Naive thymus-derived CD4-positive, alpha-beta T cell (primary cell): ENCODE measurements at regions of chr13 and their contacts with region 1.

Region 1: DNA sequence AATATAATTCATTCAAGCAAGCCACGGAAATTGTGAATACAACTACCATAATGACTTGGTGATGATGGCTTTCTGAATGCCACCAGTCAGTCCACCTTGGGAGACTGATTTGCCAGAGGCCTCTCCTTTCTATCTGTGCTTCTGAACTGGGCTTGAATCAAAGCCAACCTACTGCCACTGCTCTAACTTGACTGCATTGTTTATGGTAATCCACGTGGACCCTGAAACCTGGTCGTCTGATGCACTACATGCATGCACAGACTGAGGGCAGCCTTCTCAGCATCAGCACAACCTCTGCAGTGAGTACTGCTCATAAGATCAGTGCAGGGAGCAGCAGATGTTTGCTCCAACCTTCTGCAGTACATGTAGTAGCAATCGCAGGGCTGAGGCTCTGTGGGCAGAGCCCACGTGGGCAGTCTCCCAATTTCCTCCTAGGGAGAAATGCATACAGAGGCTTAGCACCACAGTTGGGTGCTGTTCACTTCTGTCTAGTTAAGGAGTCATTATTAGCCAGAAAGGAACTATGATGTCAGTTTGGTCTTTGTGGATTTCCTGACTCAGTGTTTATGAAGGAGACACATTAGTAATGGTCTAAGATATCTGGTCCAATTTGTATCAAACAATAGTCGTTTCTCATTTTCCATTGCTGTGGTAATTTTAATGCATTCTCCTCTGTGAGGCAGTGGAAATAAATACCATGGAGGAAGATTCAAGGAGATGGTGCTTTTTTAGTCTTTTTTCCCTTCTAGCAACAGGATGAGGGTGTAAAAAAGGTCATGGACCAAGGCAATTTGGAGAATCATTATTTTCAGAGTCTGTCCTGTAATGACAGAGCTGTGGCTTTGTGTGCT is 82.5 kb downstream of the AKAP11 start:
- DNase-seq: peak in 7 of 9 donors; percentile 11 to 44 (median 24)
- ATAC-seq: peak; percentile 66
- H3K4me3 ChIP-seq: peak overlapping the region; percentile 27
- H3K4me3 Mint-ChIP-seq: peak overlapping the region; percentile 52 to 79 (median 72)
- H3K27ac ChIP-seq: peak overlapping the region; percentile 56
- H3K27ac Mint-ChIP-seq: peak overlapping the region; percentile 80 to 96 (median 91)
- H3K4me1 ChIP-seq: peaks cover 33 to 35% of the 10 kb centered on the region in 2 donors
- H3K4me1 Mint-ChIP-seq: peaks cover 19 to 53% (median 48%) of the 10 kb centered on the region in 7 donors
- H3K27me3 ChIP-seq: no peaks in the 10 kb centered on the region
- H3K27me3 Mint-ChIP-seq: no peaks in the 10 kb centered on the region

Region 2: GRCh38 chr13:42056146-42056545 is 298.3 kb before region 1 on chr13:
- CTCF ChIA-PET with region 1: no interaction called
- POLR2A ChIA-PET with region 1: no interaction called
- intact Hi-C with region 1: no loop called
- DNase-seq: no peak
- ATAC-seq: no peak
- H3K4me3 ChIP-seq: no peak overlapping the region
- H3K4me3 Mint-ChIP-seq: no peak overlapping the region
- H3K27ac ChIP-seq: no peak overlapping the region
- H3K27ac Mint-ChIP-seq: no peak overlapping the region
- H3K4me1 ChIP-seq: no peaks in the 10 kb centered on the region
- H3K4me1 Mint-ChIP-seq: peaks cover 0 to 36% (median 4%) of the 10 kb centered on the region in 7 donors
- H3K27me3 ChIP-seq: no peaks in the 10 kb centered on the region
- H3K27me3 Mint-ChIP-seq: no peaks in the 10 kb centered on the region

Region 3: GRCh38 chr13:42320375-42320787 is 34.1 kb before region 1 on chr13:
- CTCF ChIA-PET with region 1: no interaction called
- POLR2A ChIA-PET with region 1: no interaction called
- intact Hi-C with region 1: loop called in 1 of 2 experiments (anchors 5 kb)
- DNase-seq: no peak
- ATAC-seq: no peak
- H3K4me3 ChIP-seq: no peak overlapping the region
- H3K4me3 Mint-ChIP-seq: peak overlapping the region in 1 of 10 donors; percentile 39
- H3K27ac ChIP-seq: no peak overlapping the region
- H3K27ac Mint-ChIP-seq: peak overlapping the region in 5 of 9 donors; percentile 7 to 89 (median 56)
- H3K4me1 ChIP-seq: peaks cover 0 to 4% of the 10 kb centered on the region in 2 donors
- H3K4me1 Mint-ChIP-seq: peaks cover 11 to 31% (median 21%) of the 10 kb centered on the region in 7 donors
- H3K27me3 ChIP-seq: no peaks in the 10 kb centered on the region
- H3K27me3 Mint-ChIP-seq: no peaks in the 10 kb centered on the region

Region 4: GRCh38 chr13:42377640-42378382 is 23.3 kb after region 1 on chr13:
- CTCF ChIA-PET with region 1: no interaction called
- POLR2A ChIA-PET with region 1: interaction called, 3 read pairs
- intact Hi-C with region 1: loop called in 1 of 2 experiments (anchors 1 kb)
- DNase-seq: peak in 2 of 9 donors; percentile 28 to 56
- ATAC-seq: peak; percentile 83
- H3K4me3 ChIP-seq: no peak overlapping the region
- H3K4me3 Mint-ChIP-seq: peak overlapping the region in 5 of 10 donors; percentile 16 to 63 (median 33)
- H3K27ac ChIP-seq: peak overlapping the region; percentile 19
- H3K27ac Mint-ChIP-seq: peak overlapping the region in 6 of 9 donors; percentile 33 to 92 (median 55)
- H3K4me1 ChIP-seq: peaks cover 17 to 18% of the 10 kb centered on the region in 2 donors
- H3K4me1 Mint-ChIP-seq: peaks cover 10 to 61% (median 29%) of the 10 kb centered on the region in 7 donors
- H3K27me3 ChIP-seq: no peaks in the 10 kb centered on the region
- H3K27me3 Mint-ChIP-seq: no peaks in the 10 kb centered on the region

Region 5: DNA sequence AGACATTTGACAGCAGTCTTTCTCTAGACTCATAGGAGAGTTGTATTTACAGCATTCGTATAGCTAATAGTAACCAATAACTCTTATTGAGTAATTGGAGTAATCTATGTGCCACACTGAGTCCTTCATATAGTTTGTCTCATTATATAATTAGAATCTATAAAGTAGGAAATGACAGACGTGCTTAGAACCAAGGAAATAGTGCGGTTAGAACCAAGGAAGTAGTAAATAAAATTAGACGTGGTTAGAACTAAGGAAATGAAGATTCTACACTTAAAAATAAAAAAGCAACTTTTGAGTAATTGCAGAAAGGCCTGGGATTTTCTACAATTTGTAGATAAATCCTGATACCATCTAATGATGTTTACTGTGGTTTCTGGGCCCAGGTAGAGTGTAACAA is 111.7 kb after region 1 on chr13:
- CTCF ChIA-PET with region 1: no interaction called
- POLR2A ChIA-PET with region 1: no interaction called
- intact Hi-C with region 1: loop called in 1 of 2 experiments (anchors 2 kb)
- DNase-seq: peak in 3 of 9 donors; percentile 10 to 23 (median 21)
- ATAC-seq: peak; percentile 29
- H3K4me3 ChIP-seq: peak overlapping the region; percentile 1
- H3K4me3 Mint-ChIP-seq: peak overlapping the region in 9 of 10 donors; percentile 0 to 73 (median 59)
- H3K27ac ChIP-seq: no peak overlapping the region
- H3K27ac Mint-ChIP-seq: peak overlapping the region in 6 of 9 donors; percentile 10 to 83 (median 23)
- H3K4me1 ChIP-seq: peaks cover 7 to 14% of the 10 kb centered on the region in 2 donors
- H3K4me1 Mint-ChIP-seq: peaks cover 6 to 44% (median 30%) of the 10 kb centered on the region in 7 donors
- H3K27me3 ChIP-seq: no peaks in the 10 kb centered on the region
- H3K27me3 Mint-ChIP-seq: no peaks in the 10 kb centered on the region

Region 6: GRCh38 chr13:42478531-42479156 is 124.2 kb after region 1 on chr13:
- CTCF ChIA-PET with region 1: no interaction called
- POLR2A ChIA-PET with region 1: no interaction called
- intact Hi-C with region 1: loop called in 1 of 2 experiments (anchors 1 kb)
- DNase-seq: peak in 2 of 9 donors; percentile 7 to 20
- ATAC-seq: peak; percentile 32
- H3K4me3 ChIP-seq: no peak overlapping the region
- H3K4me3 Mint-ChIP-seq: no peak overlapping the region
- H3K27ac ChIP-seq: no peak overlapping the region
- H3K27ac Mint-ChIP-seq: peak overlapping the region in 1 of 9 donors; percentile 26
- H3K4me1 ChIP-seq: no peaks in the 10 kb centered on the region
- H3K4me1 Mint-ChIP-seq: peaks cover 0 to 16% (median 4%) of the 10 kb centered on the region in 7 donors
- H3K27me3 ChIP-seq: no peaks in the 10 kb centered on the region
- H3K27me3 Mint-ChIP-seq: no peaks in the 10 kb centered on the region

Region 7: GRCh38 chr13:42574435-42575311 is 220.2 kb after region 1 on chr13:
- CTCF ChIA-PET with region 1: no interaction called
- POLR2A ChIA-PET with region 1: no interaction called
- intact Hi-C with region 1: loop called in 1 of 2 experiments (anchors 5 kb)
- DNase-seq: peak in 7 of 9 donors; percentile 15 to 66 (median 30)
- ATAC-seq: peak; percentile 68
- H3K4me3 ChIP-seq: peak overlapping the region; percentile 50
- H3K4me3 Mint-ChIP-seq: peak overlapping the region; percentile 78 to 97 (median 92)
- H3K27ac ChIP-seq: no peak overlapping the region
- H3K27ac Mint-ChIP-seq: peak overlapping the region in 6 of 9 donors; percentile 5 to 65 (median 32)
- H3K4me1 ChIP-seq: peaks cover 5 to 9% of the 10 kb centered on the region in 2 donors
- H3K4me1 Mint-ChIP-seq: peaks cover 10 to 38% (median 25%) of the 10 kb centered on the region in 7 donors
- H3K27me3 ChIP-seq: no peaks in the 10 kb centered on the region
- H3K27me3 Mint-ChIP-seq: peaks cover 16 to 60% (median 24%) of the 10 kb centered on the region in 5 donors

Region 8: GRCh38 chr13:42594970-42595571 is 240.6 kb after region 1 on chr13:
- CTCF ChIA-PET with region 1: no interaction called
- POLR2A ChIA-PET with region 1: no interaction called
- intact Hi-C with region 1: loop called in 1 of 2 experiments (anchors 1 kb)
- DNase-seq: peak in 6 of 9 donors; percentile 25 to 53 (median 40)
- ATAC-seq: peak; percentile 62
- H3K4me3 ChIP-seq: no peak overlapping the region
- H3K4me3 Mint-ChIP-seq: no peak overlapping the region
- H3K27ac ChIP-seq: no peak overlapping the region
- H3K27ac Mint-ChIP-seq: no peak overlapping the region
- H3K4me1 ChIP-seq: no peaks in the 10 kb centered on the region
- H3K4me1 Mint-ChIP-seq: peaks cover 0 to 5% (median 0%) of the 10 kb centered on the region in 7 donors
- H3K27me3 ChIP-seq: no peaks in the 10 kb centered on the region
- H3K27me3 Mint-ChIP-seq: peaks cover 0 to 11% (median 0%) of the 10 kb centered on the region in 5 donors